Caco-2 (cell line): ENCODE measurements at regions of chrX and their contacts with region 1.

Region 1: DNA sequence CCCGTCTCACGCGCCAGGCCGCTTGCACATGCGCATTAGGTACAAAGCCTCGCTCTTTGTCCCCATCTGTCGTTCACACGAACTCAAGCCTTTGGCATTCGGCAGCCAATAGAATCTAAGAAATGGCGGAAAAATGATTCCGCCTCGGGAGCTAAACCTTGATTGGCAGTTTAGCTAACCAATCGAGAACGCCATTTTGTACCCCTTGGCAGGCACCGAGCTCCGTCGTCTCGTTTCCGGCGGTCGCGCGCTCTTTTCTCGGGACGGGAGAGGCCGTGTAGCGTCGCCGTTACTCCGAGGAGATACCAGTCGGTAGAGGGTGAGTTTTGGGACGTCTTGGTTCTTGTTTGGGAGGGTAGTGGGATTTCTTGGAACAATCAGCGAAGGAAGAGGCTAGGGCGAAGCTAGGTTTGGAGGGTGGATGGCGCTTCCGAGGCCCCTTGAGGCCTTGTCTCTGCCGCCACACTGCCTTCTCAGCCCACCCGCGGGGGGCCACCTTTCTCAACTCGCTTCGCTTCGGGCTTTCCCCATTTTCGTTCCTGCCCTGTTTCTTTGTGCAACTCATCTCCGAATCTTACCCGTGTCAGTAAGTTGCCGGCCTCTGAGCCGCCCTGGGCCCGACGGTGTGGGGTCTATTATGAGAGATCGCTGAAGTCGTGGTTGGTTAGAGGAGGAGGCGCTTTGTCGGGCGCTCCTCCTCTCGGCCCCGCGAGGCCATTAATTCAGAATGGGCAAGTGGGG is at the start of gene NONO:
- DNase-seq: peak; percentile 93 to 96
- H3K4me3 ChIP-seq: peak within 1 kb of the TSS; percentile 38
- H3K4me3 Mint-ChIP-seq: peak within 1 kb of the TSS; percentile 98
- H3K27ac Mint-ChIP-seq: peak within 1 kb of the TSS; percentile 100
- H3K4me1 ChIP-seq: 0 out of 2 replicates have a peak, but pooled peaks cover 8% of the 10 kb centered on the region
- H3K4me1 Mint-ChIP-seq: no peaks in the 10 kb centered on the region
- H3K27me3 ChIP-seq: no peaks in the 10 kb centered on the region
- H3K27me3 Mint-ChIP-seq: no peaks in the 10 kb centered on the region
- CTCF ChIP-seq: no peak
- total RNA-seq, gene NONO: 477 and 482 TPM in 2 replicates

Region 2: DNA sequence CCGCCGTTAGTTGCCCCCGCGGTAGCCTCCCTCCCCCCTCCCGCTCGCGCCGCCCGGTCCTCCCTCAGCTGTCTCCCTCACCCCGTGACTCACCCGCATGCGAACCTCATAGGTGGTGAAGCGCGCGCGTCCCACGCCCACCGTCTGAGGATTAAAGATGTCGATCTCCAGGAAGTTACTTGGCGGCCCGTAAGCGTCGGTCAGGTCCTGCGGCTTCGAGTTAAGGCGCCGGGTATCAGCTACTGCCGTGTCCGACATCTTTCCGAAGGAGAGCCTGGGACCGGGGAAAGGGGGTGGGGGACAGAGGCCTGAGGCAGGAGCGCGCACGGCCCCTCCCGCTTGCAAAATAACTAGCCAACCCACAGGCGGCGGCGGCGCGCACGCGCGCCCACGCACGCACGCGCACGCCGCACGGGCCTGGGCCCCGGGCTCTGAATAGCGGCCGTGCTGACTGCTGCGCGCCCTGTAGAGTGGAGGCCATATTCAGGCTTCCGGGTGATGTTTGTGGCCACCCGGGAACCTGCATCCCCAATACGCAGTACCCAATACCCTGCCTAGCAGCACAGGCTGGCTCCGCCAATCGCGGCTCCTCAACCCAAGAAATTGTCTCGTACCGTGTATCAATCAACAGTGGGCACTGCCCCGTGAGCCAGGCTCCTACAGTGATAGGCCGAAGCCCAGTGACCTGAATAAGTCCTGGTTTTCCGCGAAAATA is 215.4 kb before region 1 on chrX and contains the start of gene SNX12:
- CTCF ChIA-PET with region 1: no interaction called
- POLR2A ChIA-PET with region 1: no interaction called
- intact Hi-C with region 1: no loop called
- DNase-seq: peak; percentile 92 to 93
- H3K4me3 ChIP-seq: peak within 1 kb of the TSS; percentile 66
- H3K4me3 Mint-ChIP-seq: peak within 1 kb of the TSS; percentile 100
- H3K27ac Mint-ChIP-seq: peak within 1 kb of the TSS; percentile 94
- H3K4me1 ChIP-seq: 0 out of 2 replicates have a peak, but pooled peaks cover 5% of the 10 kb centered on the region
- H3K4me1 Mint-ChIP-seq: peaks cover 28% of the 10 kb centered on the region
- H3K27me3 ChIP-seq: no peaks in the 10 kb centered on the region
- H3K27me3 Mint-ChIP-seq: no peaks in the 10 kb centered on the region
- CTCF ChIP-seq: no peak
- total RNA-seq, gene SNX12: 88.0 and 89.0 TPM in 2 replicates

Region 3: DNA sequence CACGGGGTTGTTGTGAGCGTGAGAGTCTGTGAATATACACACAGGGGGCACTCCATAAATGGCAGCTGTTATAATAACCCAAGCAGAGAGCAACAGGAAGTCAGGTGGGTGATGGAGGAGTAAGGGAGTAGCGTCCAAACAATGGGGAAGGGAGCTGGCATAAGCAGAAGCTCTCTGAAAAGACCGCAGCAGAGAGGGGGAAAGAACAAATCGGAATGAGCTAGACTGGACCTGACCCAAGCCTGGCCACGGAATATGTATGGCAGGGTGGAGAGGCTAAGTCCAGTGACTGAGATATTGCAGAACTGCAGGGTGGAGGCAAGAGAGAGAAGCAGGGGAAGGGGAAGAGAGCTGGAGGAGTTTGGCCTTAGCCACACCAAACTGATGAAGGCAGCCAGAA is 67.1 kb before region 1 on chrX:
- CTCF ChIA-PET with region 1: interaction called, 5 read pairs
- POLR2A ChIA-PET with region 1: interaction called, 3 read pairs
- intact Hi-C with region 1: loop called (anchors 10 kb)
- DNase-seq: no peak
- H3K4me3 ChIP-seq: peak overlapping the region; percentile 32
- H3K4me3 Mint-ChIP-seq: peak overlapping the region; percentile 65
- H3K27ac Mint-ChIP-seq: peak overlapping the region; percentile 73
- H3K4me1 ChIP-seq: peaks cover 24% of the 10 kb centered on the region
- H3K4me1 Mint-ChIP-seq: peaks cover 40% of the 10 kb centered on the region
- H3K27me3 ChIP-seq: no peaks in the 10 kb centered on the region
- H3K27me3 Mint-ChIP-seq: no peaks in the 10 kb centered on the region
- CTCF ChIP-seq: no peak

Region 4: DNA sequence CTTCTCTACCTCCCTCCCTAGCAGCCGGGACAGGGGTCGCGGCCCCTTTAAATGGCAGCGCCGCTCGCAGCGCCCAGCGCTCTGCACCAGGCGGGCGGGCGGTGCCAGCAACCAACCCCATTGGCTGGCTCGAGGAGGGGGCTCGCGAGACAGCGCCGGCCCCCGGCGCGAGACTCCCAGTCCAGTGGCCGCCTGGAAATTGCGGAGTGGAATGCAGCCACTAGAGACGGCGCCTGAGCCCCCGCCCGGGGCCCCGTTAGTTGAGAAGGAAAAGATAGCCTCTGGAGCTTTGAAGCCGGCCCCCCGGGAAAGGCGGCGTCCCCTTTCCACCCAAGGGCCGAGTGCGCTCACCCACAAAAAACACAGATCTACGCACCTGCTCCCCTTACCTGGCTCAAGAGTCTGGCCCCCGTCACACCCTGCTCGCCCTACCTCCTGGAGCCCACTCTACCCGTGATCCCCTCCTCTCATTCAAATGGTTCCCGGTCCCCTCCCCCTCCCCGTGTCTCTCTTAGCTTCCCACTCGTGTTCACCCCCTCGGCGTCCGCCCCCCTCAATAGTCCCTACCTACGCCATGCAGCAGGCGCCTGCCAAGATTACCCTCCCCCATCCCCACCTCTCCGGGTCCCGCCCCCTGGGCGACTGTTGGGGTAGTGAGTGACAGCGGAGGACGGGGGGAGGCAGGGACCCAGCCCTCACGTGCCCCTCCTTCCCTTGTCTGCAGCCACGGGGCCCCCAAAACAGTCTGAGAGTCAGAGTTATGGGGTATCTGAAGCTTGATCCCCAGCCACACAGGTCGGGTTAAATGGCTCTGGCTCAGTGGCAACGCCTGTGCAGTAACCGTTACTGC is 29.3 kb before region 1 on chrX and contains the start of gene ZMYM3:
- CTCF ChIA-PET with region 1: no interaction called
- POLR2A ChIA-PET with region 1: interaction called, 11 read pairs
- intact Hi-C with region 1: loop called (anchors 1 kb)
- DNase-seq: peak; percentile 84 to 88
- H3K4me3 ChIP-seq: peak within 1 kb of the TSS; percentile 89
- H3K4me3 Mint-ChIP-seq: peak within 1 kb of the TSS; percentile 85
- H3K27ac Mint-ChIP-seq: peak within 1 kb of the TSS; percentile 82
- H3K4me1 ChIP-seq: peaks cover 15% of the 10 kb centered on the region; the same call in 1 of the 2 replicates
- H3K4me1 Mint-ChIP-seq: peaks cover 7% of the 10 kb centered on the region
- H3K27me3 ChIP-seq: no peaks in the 10 kb centered on the region
- H3K27me3 Mint-ChIP-seq: no peaks in the 10 kb centered on the region
- CTCF ChIP-seq: no peak
- total RNA-seq, gene ZMYM3: 51.9 and 55.1 TPM in 2 replicates

Region 5: GRCh38 chrX:71365876-71366673 is 82.5 kb after region 1 on chrX and contains the start of gene TAF1:
- CTCF ChIA-PET with region 1: interaction called, 5 read pairs
- POLR2A ChIA-PET with region 1: interaction called, 39 read pairs
- intact Hi-C with region 1: loop called (anchors 5 kb)
- DNase-seq: peak; percentile 91 to 96
- H3K4me3 ChIP-seq: peak within 1 kb of the TSS; percentile 71
- H3K4me3 Mint-ChIP-seq: peak within 1 kb of the TSS; percentile 94
- H3K27ac Mint-ChIP-seq: peak within 1 kb of the TSS; percentile 95
- H3K4me1 ChIP-seq: no peaks in the 10 kb centered on the region
- H3K4me1 Mint-ChIP-seq: no peaks in the 10 kb centered on the region
- H3K27me3 ChIP-seq: no peaks in the 10 kb centered on the region
- H3K27me3 Mint-ChIP-seq: no peaks in the 10 kb centered on the region
- CTCF ChIP-seq: no peak
- total RNA-seq, gene TAF1: 40.7 and 41.2 TPM in 2 replicates